ENCODE measurements at regions of chr21 and their contacts with region 1.

Region 1: DNA sequence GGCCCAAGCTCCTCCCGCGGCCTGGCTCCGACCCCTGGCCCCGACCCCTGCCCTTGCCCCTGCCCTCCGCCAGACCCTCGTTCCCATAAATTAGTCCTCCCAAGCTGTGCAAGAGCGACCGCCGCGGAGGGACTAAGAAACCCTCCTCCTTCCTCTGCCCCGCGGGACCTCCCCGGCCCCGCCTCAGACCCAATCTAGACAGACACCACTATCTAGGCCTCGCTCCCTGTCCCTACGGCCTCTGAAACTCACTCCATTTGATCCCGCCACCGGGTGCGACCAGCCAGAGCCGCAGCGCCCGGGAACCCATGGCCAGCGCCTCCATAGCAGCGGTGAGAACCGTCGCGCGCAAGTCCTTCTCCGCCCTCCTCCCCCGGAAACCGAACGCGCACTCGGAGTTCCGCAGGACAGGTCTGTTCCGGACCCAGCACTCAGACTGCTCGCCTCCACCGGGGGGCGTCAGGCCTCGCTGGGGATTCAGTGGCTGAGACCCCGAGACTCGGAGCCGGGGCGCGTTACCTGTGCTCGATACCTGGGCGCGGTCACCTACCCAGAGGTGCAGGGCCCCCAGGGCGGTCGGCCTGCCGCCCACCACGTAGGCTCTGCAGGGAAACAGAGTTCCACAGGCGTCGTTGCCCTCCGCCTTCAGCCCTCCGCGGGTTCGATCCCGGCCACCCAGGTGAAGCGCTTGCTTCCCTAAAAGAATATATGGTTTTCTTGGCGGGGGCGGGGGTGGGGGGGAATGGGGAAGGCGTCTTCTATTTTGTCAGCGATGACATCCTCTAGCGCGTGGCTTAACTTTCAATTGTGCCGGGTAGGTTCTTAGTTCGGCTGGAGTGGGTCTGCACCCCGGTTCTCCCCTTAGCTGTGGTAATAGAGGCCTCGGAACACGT is at the start of gene MRPL39:
- DNase-seq: peak; percentile 92
- H3K4me3 ChIP-seq: peak within 1 kb of the TSS; percentile 82
- H3K27ac ChIP-seq: peak within 1 kb of the TSS; percentile 48
- H3K4me1 ChIP-seq: peaks cover 22% of the 10 kb centered on the region
- CTCF ChIP-seq: peak; percentile 74
- total RNA-seq, gene MRPL39: 42.1 and 45.0 TPM in 2 replicates

Region 2: GRCh38 chr21:25188677-25189079 is 418.7 kb before region 1 on chr21:
- CTCF ChIA-PET with region 1: no interaction called
- POLR2A ChIA-PET with region 1: no interaction called
- intact Hi-C with region 1: no loop called
- DNase-seq: no peak
- H3K4me3 ChIP-seq: no peak overlapping the region
- H3K27ac ChIP-seq: no peak overlapping the region
- H3K4me1 ChIP-seq: no peaks in the 10 kb centered on the region
- CTCF ChIP-seq: no peak

Region 3: DNA sequence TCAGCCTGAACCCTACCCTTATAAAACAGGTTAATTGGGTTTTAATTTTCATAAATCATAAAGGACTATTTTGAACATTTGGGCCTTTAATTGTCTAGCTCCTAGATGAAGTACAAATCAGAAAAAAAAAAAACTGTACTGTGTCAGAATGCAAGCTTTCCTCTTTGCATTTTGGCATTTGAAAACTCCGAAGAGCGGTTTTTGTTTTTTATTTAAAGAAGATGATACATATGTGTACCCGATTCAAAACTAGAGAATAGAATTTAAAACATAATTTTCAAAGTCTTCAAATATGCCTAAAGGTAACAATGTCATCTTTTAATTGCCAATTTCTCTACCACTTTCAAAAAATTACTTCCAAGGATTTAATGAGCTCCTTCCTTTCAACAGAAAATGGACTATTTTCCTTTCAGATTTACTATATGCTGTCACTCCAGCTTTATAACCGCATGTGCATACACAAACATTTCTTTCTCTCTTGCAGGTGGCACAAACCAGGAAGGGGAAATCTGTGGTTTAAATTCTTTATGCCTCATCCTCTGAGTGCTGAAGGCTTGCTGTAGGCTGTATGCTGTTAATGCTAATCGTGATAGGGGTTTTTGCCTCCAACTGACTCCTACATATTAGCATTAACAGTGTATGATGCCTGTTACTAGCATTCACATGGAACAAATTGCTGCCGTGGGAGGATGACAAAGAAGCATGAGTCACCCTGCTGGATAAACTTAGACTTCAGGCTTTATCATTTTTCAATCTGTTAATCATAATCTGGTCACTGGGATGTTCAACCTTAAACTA is 33.8 kb before region 1 on chr21:
- CTCF ChIA-PET with region 1: interaction called, 3 read pairs
- POLR2A ChIA-PET with region 1: interaction called, 6 read pairs
- intact Hi-C with region 1: loop called (anchors 2 kb)
- DNase-seq: peak; percentile 80
- H3K4me3 ChIP-seq: peak overlapping the region; percentile 45
- H3K27ac ChIP-seq: peak overlapping the region; percentile 85
- H3K4me1 ChIP-seq: peaks cover 38% of the 10 kb centered on the region
- CTCF ChIP-seq: no peak

Region 4: GRCh38 chr21:25708467-25709065 is 101.2 kb after region 1 on chr21:
- CTCF ChIA-PET with region 1: interaction called, 3 read pairs
- POLR2A ChIA-PET with region 1: interaction called, 5 read pairs
- intact Hi-C with region 1: loop called (anchors 1 kb)
- DNase-seq: peak; percentile 60
- H3K4me3 ChIP-seq: no peak overlapping the region
- H3K27ac ChIP-seq: no peak overlapping the region
- H3K4me1 ChIP-seq: no peaks in the 10 kb centered on the region
- CTCF ChIP-seq: peak; percentile 95

Region 5: DNA sequence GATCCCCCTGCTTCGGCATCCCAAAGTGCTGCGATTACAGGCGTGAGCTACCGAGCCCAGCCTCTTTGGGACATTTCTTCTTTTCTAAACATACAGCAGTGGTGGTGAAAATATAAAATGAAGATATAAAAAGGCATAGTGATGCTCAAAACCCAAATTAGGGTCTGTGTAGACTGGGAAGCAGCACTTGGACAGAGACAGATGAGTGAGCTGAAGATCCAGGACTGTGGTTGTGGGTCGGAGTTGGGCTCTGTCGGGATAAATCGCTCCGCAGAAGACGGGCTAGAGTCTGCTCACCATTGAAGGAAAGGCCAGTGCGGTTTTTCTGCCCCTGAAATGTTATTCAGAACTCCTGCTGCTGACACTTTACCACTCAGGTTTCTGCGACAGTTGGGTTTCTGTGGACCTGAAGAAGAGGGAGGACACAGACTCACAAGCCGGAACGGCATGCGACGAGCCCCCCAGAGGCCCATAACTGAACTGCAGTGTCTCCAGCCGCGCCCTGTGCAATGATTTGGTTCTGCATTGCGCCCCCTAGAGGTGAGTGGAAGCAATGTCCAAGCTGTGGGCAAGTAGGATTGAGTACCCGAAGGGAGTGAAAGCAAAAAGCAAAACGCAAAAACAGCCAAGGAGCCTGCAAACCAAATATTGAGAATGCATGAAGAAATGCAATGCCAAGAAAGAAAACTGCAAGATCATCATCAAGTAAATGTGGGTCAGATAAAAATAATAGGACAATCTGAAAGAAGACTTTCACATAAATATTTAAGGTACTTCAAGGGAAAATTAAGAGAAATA is 194.0 kb after region 1 on chr21:
- CTCF ChIA-PET with region 1: no interaction called
- POLR2A ChIA-PET with region 1: no interaction called
- intact Hi-C with region 1: loop called (anchors 1 kb)
- DNase-seq: peak; percentile 86
- H3K4me3 ChIP-seq: no peak overlapping the region
- H3K27ac ChIP-seq: no peak overlapping the region
- H3K4me1 ChIP-seq: no peaks in the 10 kb centered on the region
- CTCF ChIP-seq: peak; percentile 99

Region 6: GRCh38 chr21:25881525-25882376 is 274.4 kb after region 1 on chr21:
- CTCF ChIA-PET with region 1: no interaction called
- POLR2A ChIA-PET with region 1: no interaction called
- intact Hi-C with region 1: loop called (anchors 5 kb)
- DNase-seq: peak; percentile 62
- H3K4me3 ChIP-seq: no peak overlapping the region
- H3K27ac ChIP-seq: no peak overlapping the region
- H3K4me1 ChIP-seq: no peaks in the 10 kb centered on the region
- CTCF ChIP-seq: peak; percentile 99

Region 7: DNA sequence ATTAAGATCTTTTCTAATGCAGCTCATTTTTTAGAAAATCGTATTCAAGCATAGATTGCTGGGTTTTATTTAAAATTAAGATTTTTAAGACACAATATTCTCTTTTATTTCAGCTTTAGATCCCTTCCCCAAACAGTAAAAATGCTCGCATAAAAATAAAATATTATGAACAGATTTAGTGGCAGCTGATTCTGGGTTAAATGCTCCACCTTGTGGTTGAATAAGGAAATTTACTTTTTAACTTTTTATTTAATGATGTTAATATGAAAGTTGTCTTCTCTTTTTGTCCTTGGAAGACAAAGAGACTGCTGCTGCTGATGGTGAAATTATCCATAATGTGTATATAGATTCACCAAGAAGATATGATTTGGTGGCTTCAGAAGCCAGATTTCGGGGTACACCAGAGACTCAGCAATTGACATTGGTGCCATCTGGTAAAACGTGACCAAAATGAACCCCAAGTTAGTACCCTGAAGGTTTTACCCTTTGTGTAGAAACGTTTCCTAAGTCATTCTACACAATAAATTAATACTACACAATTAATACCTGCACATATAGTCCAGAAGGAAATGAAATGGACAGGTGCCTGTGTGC is 1109.8 kb after region 1 on chr21:
- CTCF ChIA-PET with region 1: no interaction called
- POLR2A ChIA-PET with region 1: no interaction called
- intact Hi-C with region 1: loop called (anchors 1 kb)
- DNase-seq: peak; percentile 24
- H3K4me3 ChIP-seq: no peak overlapping the region
- H3K27ac ChIP-seq: no peak overlapping the region
- H3K4me1 ChIP-seq: no peaks in the 10 kb centered on the region
- CTCF ChIP-seq: peak; percentile 85

Measured in OCI-LY7 (cell line).